ENCODE measurements at regions of chr9 and their contacts with region 1.

Region 1: DNA sequence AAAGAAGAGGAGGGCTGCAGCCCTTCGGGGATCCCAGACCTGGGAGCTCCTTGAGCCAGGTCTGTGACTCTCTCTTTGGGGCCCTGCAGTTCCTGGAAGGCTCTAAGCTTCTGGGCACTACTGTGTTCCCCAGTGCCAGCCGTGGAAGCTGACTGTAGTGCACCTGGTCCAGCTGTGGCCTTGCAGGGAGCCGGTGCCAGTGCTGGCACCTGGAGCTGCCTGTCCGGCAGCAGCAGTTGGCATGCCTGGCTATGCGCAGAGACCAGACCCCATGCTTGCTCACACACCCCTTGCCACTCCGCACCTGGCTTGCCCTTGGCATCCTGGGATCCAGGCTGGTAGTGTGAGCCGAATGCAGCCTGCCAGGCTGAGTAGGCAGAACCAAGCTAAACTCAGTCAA is 91.0 kb upstream of the PUM3 start:
- DNase-seq: no peak
- H3K4me3 ChIP-seq: no peak overlapping the region
- H3K27ac ChIP-seq: no peak overlapping the region
- H3K4me1 ChIP-seq: no peaks in the 10 kb centered on the region
- H3K27me3 ChIP-seq: no peaks in the 10 kb centered on the region
- CTCF ChIP-seq: no peak
- POLR2A ChIP-seq: no peak

Region 2: DNA sequence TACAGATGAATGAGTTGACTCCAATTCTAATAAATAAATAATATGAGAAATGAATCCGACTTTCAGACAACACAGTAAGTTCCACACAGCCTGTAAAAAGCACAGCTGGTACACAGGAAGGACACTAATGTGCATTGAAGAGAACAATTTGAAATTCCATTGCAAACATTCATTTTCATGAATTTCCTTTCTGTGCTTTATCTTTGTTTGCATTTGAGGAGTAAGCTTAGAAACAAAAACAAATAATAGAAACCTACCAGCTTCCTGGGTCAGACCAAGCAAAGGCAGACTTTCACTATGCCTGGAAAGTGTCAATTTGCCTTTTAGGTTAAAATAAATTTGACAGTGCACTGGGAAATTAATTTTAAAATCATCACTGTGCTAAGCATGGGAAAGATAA is 457.1 kb before region 1 on chr9:
- intact Hi-C with region 1: no loop called
- DNase-seq: no peak
- H3K4me3 ChIP-seq: no peak overlapping the region
- H3K27ac ChIP-seq: no peak overlapping the region
- H3K4me1 ChIP-seq: no peaks in the 10 kb centered on the region
- H3K27me3 ChIP-seq: no peaks in the 10 kb centered on the region
- CTCF ChIP-seq: no peak
- POLR2A ChIP-seq: no peak

Region 3: DNA sequence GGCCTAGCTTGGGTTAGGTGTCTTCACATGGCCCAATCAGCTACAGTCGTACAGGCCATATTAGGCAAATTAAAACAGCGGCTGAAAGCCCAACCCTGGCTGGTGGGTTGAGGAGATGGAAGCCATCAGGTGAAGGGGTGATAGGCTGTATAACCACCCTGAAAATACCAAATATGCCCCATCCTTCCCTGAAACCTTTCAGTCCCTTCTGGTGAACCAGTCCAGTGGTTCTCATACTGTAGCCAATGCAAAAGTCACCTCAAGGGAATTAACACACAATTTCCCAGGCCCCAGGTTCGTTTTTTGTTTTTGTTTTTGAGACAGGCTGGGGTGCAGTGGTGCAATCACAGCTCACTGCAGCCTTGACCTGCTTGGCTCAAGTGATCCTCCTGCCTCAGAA is 237.4 kb before region 1 on chr9:
- intact Hi-C with region 1: no loop called
- DNase-seq: peak in 2 of 7 donors; percentile 22 to 32
- H3K4me3 ChIP-seq: no peak overlapping the region
- H3K27ac ChIP-seq: no peak overlapping the region
- H3K4me1 ChIP-seq: peaks cover 0 to 3% of the 10 kb centered on the region in 2 donors
- H3K27me3 ChIP-seq: no peaks in the 10 kb centered on the region
- CTCF ChIP-seq: no peak
- POLR2A ChIP-seq: no peak

Region 4: GRCh38 chr9:2857564-2858198 is 77.2 kb before region 1 on chr9:
- intact Hi-C with region 1: no loop called
- DNase-seq: peak; percentile 64 to 90 (median 78)
- H3K4me3 ChIP-seq: no peak overlapping the region
- H3K27ac ChIP-seq: no peak overlapping the region
- H3K4me1 ChIP-seq: no peaks in the 10 kb centered on the region
- H3K27me3 ChIP-seq: no peaks in the 10 kb centered on the region
- CTCF ChIP-seq: peak; percentile 65 to 87 (median 78)
- POLR2A ChIP-seq: no peak

Region 5: GRCh38 chr9:2889023-2889422 is 45.9 kb before region 1 on chr9:
- intact Hi-C with region 1: loop called in 1 of 2 experiments (anchors 10 kb)
- DNase-seq: no peak
- H3K4me3 ChIP-seq: no peak overlapping the region
- H3K27ac ChIP-seq: no peak overlapping the region
- H3K4me1 ChIP-seq: no peaks in the 10 kb centered on the region
- H3K27me3 ChIP-seq: peaks cover 6% of the 10 kb centered on the region
- CTCF ChIP-seq: no peak
- POLR2A ChIP-seq: no peak